ENCODE measurements at regions of chr20 and their contacts with region 1.

Region 1: GRCh38 chr20:25399037-25399430 is 8.4 kb upstream of the ABHD12 start:
- DNase-seq: peak; percentile 83
- ATAC-seq: peak; percentile 98
- H3K4me3 ChIP-seq: no peak overlapping the region
- H3K27ac ChIP-seq: no peak overlapping the region
- H3K4me1 ChIP-seq: peaks cover 5% of the 10 kb centered on the region; the same call in 1 of the 2 replicates
- H3K27me3 ChIP-seq: no peaks in the 10 kb centered on the region
- CTCF ChIP-seq: peak; percentile 85
- POLR2A ChIP-seq: no peak
- RAD21 ChIP-seq: peak; percentile 86

Region 2: DNA sequence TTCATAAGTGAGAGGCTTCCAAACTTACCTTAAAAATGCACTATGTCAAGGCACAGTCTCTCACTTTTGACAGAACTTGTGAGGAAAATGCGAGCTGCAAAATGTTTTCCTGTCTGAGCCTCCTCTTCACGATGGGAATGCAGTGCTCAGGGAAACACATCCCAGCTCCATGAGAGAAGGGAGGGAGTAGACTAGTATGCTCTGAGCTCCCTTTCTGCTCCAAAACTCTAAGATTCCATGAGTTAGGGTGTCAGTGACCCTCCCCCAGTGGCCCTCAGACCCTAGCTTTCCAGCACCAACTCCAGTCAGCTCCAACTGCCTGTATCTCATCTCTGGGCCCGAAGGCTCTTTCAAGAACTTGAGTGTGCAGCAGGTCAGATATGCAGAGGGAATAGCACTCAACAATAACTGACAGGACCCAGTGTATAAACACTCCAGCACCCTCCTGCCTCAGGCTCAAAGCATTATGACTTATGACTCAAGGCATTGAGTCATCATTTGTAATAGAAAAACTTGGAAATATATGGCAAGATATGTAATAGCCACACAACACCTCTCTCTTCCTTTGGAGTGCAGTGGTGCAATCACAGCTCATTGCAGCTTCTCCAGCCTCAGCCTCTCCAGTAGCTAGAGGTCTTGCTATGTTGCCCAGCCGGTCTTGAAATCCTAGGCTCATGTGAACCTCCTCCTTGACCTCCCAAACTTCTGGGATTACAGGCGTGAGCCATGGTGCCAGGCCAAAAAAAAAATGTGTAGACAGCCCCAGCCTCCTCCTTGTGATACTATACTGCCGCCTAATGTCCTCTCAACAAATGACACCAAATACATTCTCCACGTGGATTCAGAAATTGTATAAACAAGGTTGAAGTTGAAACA is 220.2 kb before region 1 on chr20:
- CTCF ChIA-PET with region 1: no interaction called
- POLR2A ChIA-PET with region 1: no interaction called
- dilution Hi-C with region 1: no loop called
- in situ Hi-C with region 1: no loop called
- intact Hi-C with region 1: loop called (anchors 5 kb)
- DNase-seq: peak; percentile 91
- ATAC-seq: peak; percentile 86
- H3K4me3 ChIP-seq: no peak overlapping the region
- H3K27ac ChIP-seq: no peak overlapping the region
- H3K4me1 ChIP-seq: peaks cover 5% of the 10 kb centered on the region
- H3K27me3 ChIP-seq: peaks cover 12% of the 10 kb centered on the region
- CTCF ChIP-seq: peak; percentile 81
- POLR2A ChIP-seq: no peak
- RAD21 ChIP-seq: peak; percentile 92

Region 3: DNA sequence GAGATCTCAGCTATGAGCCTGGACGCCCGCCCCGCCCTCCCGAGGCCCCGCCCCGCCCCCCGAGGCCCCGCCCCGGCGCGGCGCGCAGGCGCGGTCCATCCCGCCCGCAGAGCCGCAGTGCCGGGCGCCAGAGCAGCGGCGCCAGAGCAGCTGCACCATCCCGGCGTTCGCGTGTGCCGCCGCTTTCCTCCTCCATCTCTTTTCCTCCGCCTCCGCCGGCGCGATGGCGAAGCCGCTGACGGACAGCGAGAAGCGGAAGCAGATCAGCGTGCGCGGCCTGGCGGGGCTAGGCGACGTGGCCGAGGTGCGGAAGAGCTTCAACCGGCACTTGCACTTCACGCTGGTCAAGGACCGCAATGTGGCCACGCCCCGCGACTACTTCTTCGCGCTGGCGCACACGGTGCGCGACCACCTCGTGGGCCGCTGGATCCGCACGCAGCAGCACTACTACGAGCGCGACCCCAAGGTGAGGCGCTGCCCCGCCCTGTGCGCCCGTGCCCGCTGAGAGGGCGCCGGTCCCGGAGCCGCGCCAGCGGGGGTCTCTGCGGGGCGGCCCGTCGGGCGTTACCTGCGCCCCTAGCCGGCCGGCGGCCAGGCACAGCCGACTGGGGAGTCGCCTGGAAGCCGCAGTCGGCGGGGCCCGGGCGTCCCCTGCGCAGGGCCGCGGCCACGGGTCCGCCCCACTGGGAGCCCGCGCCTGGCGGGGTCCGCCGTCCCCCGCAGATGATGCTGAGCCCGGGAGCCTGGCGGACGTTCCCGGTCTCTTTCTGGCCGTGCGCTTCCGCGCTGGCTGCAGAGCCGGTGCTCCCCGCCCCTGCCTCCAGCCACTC is 150.9 kb before region 1 on chr20 and contains the start of gene PYGB:
- CTCF ChIA-PET with region 1: no interaction called
- POLR2A ChIA-PET with region 1: no interaction called
- dilution Hi-C with region 1: no loop called
- in situ Hi-C with region 1: no loop called
- intact Hi-C with region 1: loop called (anchors 5 kb)
- DNase-seq: peak; percentile 78
- ATAC-seq: peak; percentile 87
- H3K4me3 ChIP-seq: peak within 1 kb of the TSS; percentile 81
- H3K27ac ChIP-seq: peak within 1 kb of the TSS; percentile 98
- H3K4me1 ChIP-seq: peaks cover 13% of the 10 kb centered on the region
- H3K27me3 ChIP-seq: no peaks in the 10 kb centered on the region
- CTCF ChIP-seq: no peak
- POLR2A ChIP-seq: peak; percentile 93
- RAD21 ChIP-seq: no peak; the same call in 1 of the 2 replicates
- total RNA-seq, gene PYGB: 72.4 and 81.4 TPM in 2 replicates

Region 4: GRCh38 chr20:25310268-25310920 is 88.6 kb before region 1 on chr20:
- CTCF ChIA-PET with region 1: interaction called, 3 read pairs
- POLR2A ChIA-PET with region 1: no interaction called
- dilution Hi-C with region 1: no loop called
- in situ Hi-C with region 1: no loop called
- intact Hi-C with region 1: loop called (anchors 1 kb)
- DNase-seq: peak; percentile 96
- ATAC-seq: peak; percentile 90
- H3K4me3 ChIP-seq: peak overlapping the region; percentile 27; the same call in 1 of the 2 replicates
- H3K27ac ChIP-seq: peak overlapping the region; percentile 94
- H3K4me1 ChIP-seq: peaks cover 28% of the 10 kb centered on the region
- H3K27me3 ChIP-seq: no peaks in the 10 kb centered on the region
- CTCF ChIP-seq: peak; percentile 77
- POLR2A ChIP-seq: peak; percentile 76; the same call in 1 of the 2 replicates
- RAD21 ChIP-seq: peak; percentile 78